ENCODE measurements at regions of chr7 and their contacts with region 1.

Region 1: GRCh38 chr7:121605317-121605680 is 209.2 kb upstream of the FAM3C start:
- DNase-seq: no peak
- H3K4me3 ChIP-seq: no peak overlapping the region
- CTCF ChIP-seq: no peak
- POLR2A ChIP-seq: no peak

Region 2: DNA sequence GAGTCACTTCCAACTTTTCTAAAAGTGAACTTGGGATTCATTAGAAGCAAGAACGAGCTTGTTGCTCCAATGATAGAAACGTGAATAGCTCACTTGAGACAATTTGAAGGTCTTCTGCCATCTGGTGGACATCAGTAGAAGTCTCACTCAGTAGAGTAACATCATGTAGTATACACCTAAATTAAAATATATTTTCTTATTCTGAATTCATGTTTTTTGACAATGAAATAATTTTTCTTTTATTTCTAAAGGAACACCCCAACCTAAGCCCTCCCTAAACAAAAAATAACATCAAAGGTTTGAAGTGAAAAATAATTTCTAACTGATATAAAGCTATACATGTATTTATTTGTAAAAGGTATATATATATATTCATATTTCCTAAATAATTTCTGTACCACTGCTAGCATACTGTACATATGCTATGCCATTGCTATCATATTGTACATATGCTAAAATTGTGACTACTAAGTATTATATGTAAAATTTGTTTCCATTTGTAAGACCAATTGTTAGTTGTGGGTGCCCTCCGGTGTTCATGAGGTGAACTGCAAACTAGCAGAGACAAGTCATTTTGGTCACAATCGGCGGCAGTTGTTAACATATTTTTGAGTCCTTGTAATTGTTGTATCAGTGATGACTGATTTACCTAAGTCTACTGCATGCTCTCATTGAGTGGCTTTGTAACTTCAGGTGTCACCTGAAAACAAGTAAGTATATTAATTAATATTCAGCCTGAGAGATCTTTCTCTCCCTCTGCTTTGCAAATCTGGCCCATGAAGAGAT is 389.5 kb after region 1 on chr7:
- intact Hi-C with region 1: loop called (anchors 10 kb)
- DNase-seq: peak in 1 of 2 donors; percentile 46
- H3K4me3 ChIP-seq: no peak overlapping the region
- CTCF ChIP-seq: no peak
- POLR2A ChIP-seq: no peak